ENCODE measurements at regions of chr7 and their contacts with region 1.

Region 1: GRCh38 chr7:5685205-5685604 is 96.3 kb downstream of the RNF216 start:
- DNase-seq: no peak
- H3K4me3 ChIP-seq: no peak overlapping the region
- H3K27ac ChIP-seq: no peak overlapping the region
- H3K4me1 ChIP-seq: peaks cover 0 to 3% (median 2%) of the 10 kb centered on the region in 4 experiments; a peak in 3 of 7 replicates
- H3K27me3 ChIP-seq: no peaks in the 10 kb centered on the region
- CTCF ChIP-seq: no peak
- EP300 ChIP-seq: no peak
- POLR2A ChIP-seq: no peak
- RAD21 ChIP-seq: no peak

Region 2: GRCh38 chr7:5704534-5704922 is 19.3 kb after region 1 on chr7:
- CTCF ChIA-PET with region 1: interaction called, 33 read pairs
- POLR2A ChIA-PET with region 1: no interaction called
- DNase-seq: peak; percentile 44 to 71
- H3K4me3 ChIP-seq: no peak overlapping the region
- H3K27ac ChIP-seq: no peak overlapping the region
- H3K4me1 ChIP-seq: peaks cover 0 to 3% (median under 1%) of the 10 kb centered on the region in 4 experiments; a peak in 1 of 7 replicates
- H3K27me3 ChIP-seq: no peaks in the 10 kb centered on the region
- CTCF ChIP-seq: peak in 2 of 3 experiments; percentile 81 to 91; a peak in 3 of 4 replicates
- EP300 ChIP-seq: no peak
- POLR2A ChIP-seq: no peak
- RAD21 ChIP-seq: peak; percentile 90

Measured in H1 (cell line).